Activated CD4-positive, alpha-beta T cell treated with anti-CD3 and anti-CD28 coated beads, Interleukin-2, amount 10 ng/mL, durations not matched to agents 7 days and 5 days (primary cell): ENCODE measurements at regions of chr2 and their contacts with region 1.

Region 1: GRCh38 chr2:230068016-230068650 is 591 bp downstream of the SLC16A14 start:
- DNase-seq: peak; percentile 33
- H3K4me3 Mint-ChIP-seq: peak overlapping the region; percentile 72
- H3K27ac Mint-ChIP-seq: no peak overlapping the region
- H3K4me1 Mint-ChIP-seq: peaks cover 16% of the 10 kb centered on the region
- H3K27me3 Mint-ChIP-seq: peaks cover 25% of the 10 kb centered on the region

Region 2: GRCh38 chr2:229996320-229996719 is 71.8 kb before region 1 on chr2:
- CTCF ChIA-PET with region 1: no interaction called
- POLR2A ChIA-PET with region 1: no interaction called
- DNase-seq: no peak
- H3K4me3 Mint-ChIP-seq: no peak overlapping the region
- H3K27ac Mint-ChIP-seq: no peak overlapping the region
- H3K4me1 Mint-ChIP-seq: peaks cover 3% of the 10 kb centered on the region
- H3K27me3 Mint-ChIP-seq: no peaks in the 10 kb centered on the region

Region 3: GRCh38 chr2:230052299-230052698 is 15.8 kb before region 1 on chr2:
- CTCF ChIA-PET with region 1: interaction called, 11 read pairs
- POLR2A ChIA-PET with region 1: no interaction called
- DNase-seq: no peak
- H3K4me3 Mint-ChIP-seq: no peak overlapping the region
- H3K27ac Mint-ChIP-seq: no peak overlapping the region
- H3K4me1 Mint-ChIP-seq: no peaks in the 10 kb centered on the region
- H3K27me3 Mint-ChIP-seq: no peaks in the 10 kb centered on the region